A673 (cell line): ENCODE measurements at regions of chr12 and their contacts with region 1.

Region 1: GRCh38 chr12:54958048-54958658 is 26.4 kb downstream of the TESPA1 start:
- DNase-seq: peak; percentile 82
- H3K4me3 ChIP-seq: no peak overlapping the region
- H3K27ac ChIP-seq: no peak overlapping the region
- H3K4me1 ChIP-seq: no peaks in the 10 kb centered on the region
- H3K27me3 ChIP-seq: no peaks in the 10 kb centered on the region
- CTCF ChIP-seq: peak; percentile 76

Region 2: GRCh38 chr12:54579696-54580333 is 378.3 kb before region 1 on chr12:
- CTCF ChIA-PET with region 1: interaction called, 4 read pairs
- POLR2A ChIA-PET with region 1: no interaction called
- intact Hi-C with region 1: loop called (anchors 5 kb)
- DNase-seq: peak; percentile 90
- H3K4me3 ChIP-seq: no peak overlapping the region
- H3K27ac ChIP-seq: peak overlapping the region; percentile 32
- H3K4me1 ChIP-seq: peaks cover 37% of the 10 kb centered on the region
- H3K27me3 ChIP-seq: no peaks in the 10 kb centered on the region
- CTCF ChIP-seq: peak; percentile 99

Region 3: GRCh38 chr12:54596526-54596946 is 361.6 kb before region 1 on chr12:
- CTCF ChIA-PET with region 1: no interaction called
- POLR2A ChIA-PET with region 1: no interaction called
- intact Hi-C with region 1: loop called (anchors 5 kb)
- DNase-seq: peak; percentile 91
- H3K4me3 ChIP-seq: no peak overlapping the region
- H3K27ac ChIP-seq: peak overlapping the region; percentile 74
- H3K4me1 ChIP-seq: peaks cover 26% of the 10 kb centered on the region
- H3K27me3 ChIP-seq: no peaks in the 10 kb centered on the region
- CTCF ChIP-seq: peak; percentile 93

Region 4: GRCh38 chr12:54701940-54702592 is 256.1 kb before region 1 on chr12:
- CTCF ChIA-PET with region 1: interaction called, 5 read pairs
- POLR2A ChIA-PET with region 1: no interaction called
- intact Hi-C with region 1: loop called (anchors 2 kb)
- DNase-seq: peak; percentile 70
- H3K4me3 ChIP-seq: no peak overlapping the region
- H3K27ac ChIP-seq: no peak overlapping the region
- H3K4me1 ChIP-seq: peaks cover 13% of the 10 kb centered on the region
- H3K27me3 ChIP-seq: no peaks in the 10 kb centered on the region
- CTCF ChIP-seq: peak; percentile 77

Region 5: GRCh38 chr12:54759751-54760150 is 198.4 kb before region 1 on chr12:
- CTCF ChIA-PET with region 1: interaction called, 5 read pairs
- POLR2A ChIA-PET with region 1: no interaction called
- intact Hi-C with region 1: loop called (anchors 1 kb)
- DNase-seq: peak; percentile 74
- H3K4me3 ChIP-seq: no peak overlapping the region
- H3K27ac ChIP-seq: no peak overlapping the region
- H3K4me1 ChIP-seq: no peaks in the 10 kb centered on the region
- H3K27me3 ChIP-seq: peaks cover 13% of the 10 kb centered on the region
- CTCF ChIP-seq: peak; percentile 67

Region 6: GRCh38 chr12:54853995-54854566 is 104.1 kb before region 1 on chr12 and contains the start of gene MUCL1:
- CTCF ChIA-PET with region 1: no interaction called
- POLR2A ChIA-PET with region 1: no interaction called
- intact Hi-C with region 1: loop called (anchors 1 kb)
- DNase-seq: peak; percentile 77
- H3K4me3 ChIP-seq: no peak within 1 kb of the TSS
- H3K27ac ChIP-seq: no peak within 1 kb of the TSS
- H3K4me1 ChIP-seq: no peaks in the 10 kb centered on the region
- H3K27me3 ChIP-seq: peaks cover 4% of the 10 kb centered on the region
- CTCF ChIP-seq: peak; percentile 82
- total RNA-seq, gene MUCL1: not detected in 2 replicates

Region 7: DNA sequence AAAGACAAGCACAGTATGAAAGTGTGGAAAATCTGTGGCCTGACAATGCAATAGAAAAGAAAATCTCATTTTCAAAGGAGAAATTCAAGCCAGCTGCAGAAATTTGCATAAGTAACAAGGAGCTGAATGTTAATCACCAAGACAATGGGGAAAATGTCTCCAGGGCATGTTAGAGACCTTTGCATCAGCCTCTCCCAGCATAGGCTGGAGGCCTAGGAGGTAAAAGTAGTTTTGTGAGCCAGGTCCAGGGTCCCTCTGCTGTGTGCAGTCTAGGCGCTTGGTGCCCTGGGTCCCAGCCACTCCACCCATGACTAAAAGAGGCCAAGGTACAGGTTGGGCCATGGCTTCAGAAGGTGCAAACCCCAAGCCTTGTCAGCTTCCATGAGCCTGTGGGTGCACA is 31.9 kb before region 1 on chr12:
- CTCF ChIA-PET with region 1: no interaction called
- POLR2A ChIA-PET with region 1: no interaction called
- intact Hi-C with region 1: no loop called
- DNase-seq: no peak
- H3K4me3 ChIP-seq: no peak overlapping the region
- H3K27ac ChIP-seq: no peak overlapping the region
- H3K4me1 ChIP-seq: no peaks in the 10 kb centered on the region
- H3K27me3 ChIP-seq: no peaks in the 10 kb centered on the region
- CTCF ChIP-seq: no peak

Region 8: GRCh38 chr12:56803750-56804149 is 1845.6 kb after region 1 on chr12:
- CTCF ChIA-PET with region 1: no interaction called
- POLR2A ChIA-PET with region 1: no interaction called
- intact Hi-C with region 1: no loop called
- DNase-seq: no peak
- H3K4me3 ChIP-seq: no peak overlapping the region
- H3K27ac ChIP-seq: no peak overlapping the region
- H3K4me1 ChIP-seq: no peaks in the 10 kb centered on the region
- H3K27me3 ChIP-seq: no peaks in the 10 kb centered on the region
- CTCF ChIP-seq: no peak